Naive thymus-derived CD4-positive, alpha-beta T cell (primary cell): ENCODE measurements at regions of chr2 and their contacts with region 1.

Region 1: GRCh38 chr2:84846041-84846663 is 34.7 kb downstream of the TRABD2A start:
- DNase-seq: peak in 7 of 9 donors; percentile 68 to 89 (median 84)
- ATAC-seq: peak; percentile 85
- H3K4me3 ChIP-seq: peak overlapping the region; percentile 14
- H3K4me3 Mint-ChIP-seq: peak overlapping the region; percentile 72 to 87 (median 82)
- H3K27ac ChIP-seq: peak overlapping the region; percentile 80
- H3K27ac Mint-ChIP-seq: peak overlapping the region in 8 of 9 donors; percentile 94 to 99 (median 97)
- H3K4me1 ChIP-seq: peaks cover 93 to 98% of the 10 kb centered on the region in 2 donors
- H3K4me1 Mint-ChIP-seq: peaks cover 77 to 100% (median 92%) of the 10 kb centered on the region in 7 donors
- H3K27me3 ChIP-seq: no peaks in the 10 kb centered on the region
- H3K27me3 Mint-ChIP-seq: no peaks in the 10 kb centered on the region

Region 2: DNA sequence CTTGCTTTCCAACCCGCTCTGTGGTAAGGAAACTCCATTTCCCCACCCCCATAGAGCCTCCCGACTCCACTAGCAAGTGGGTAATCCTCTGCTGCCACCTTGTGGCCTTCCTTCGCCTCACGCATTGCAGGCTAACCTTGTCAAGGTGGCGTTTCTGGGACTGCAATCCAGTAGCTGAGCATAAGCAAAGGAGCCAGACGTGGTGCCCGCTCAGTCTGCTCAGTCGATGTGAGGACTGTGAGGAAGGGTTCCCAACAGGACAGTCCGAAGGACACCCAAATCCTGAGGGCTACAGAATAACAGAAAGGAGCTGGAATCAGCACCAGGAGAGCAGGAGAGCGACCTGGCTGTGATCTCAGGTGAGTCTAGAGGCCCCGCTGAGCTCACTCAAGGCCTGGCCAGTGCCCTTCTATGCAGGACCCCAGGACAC is 531.2 kb before region 1 on chr2:
- CTCF ChIA-PET with region 1: no interaction called
- POLR2A ChIA-PET with region 1: no interaction called
- intact Hi-C with region 1: no loop called
- DNase-seq: peak; percentile 44 to 76 (median 69)
- ATAC-seq: peak; percentile 81
- H3K4me3 ChIP-seq: no peak overlapping the region
- H3K4me3 Mint-ChIP-seq: peak overlapping the region in 1 of 10 donors; percentile 9
- H3K27ac ChIP-seq: no peak overlapping the region
- H3K27ac Mint-ChIP-seq: no peak overlapping the region
- H3K4me1 ChIP-seq: no peaks in the 10 kb centered on the region
- H3K4me1 Mint-ChIP-seq: peaks cover 2 to 6% (median 5%) of the 10 kb centered on the region in 7 donors
- H3K27me3 ChIP-seq: no peaks in the 10 kb centered on the region
- H3K27me3 Mint-ChIP-seq: peaks cover 4 to 19% (median 12%) of the 10 kb centered on the region in 5 donors

Region 3: DNA sequence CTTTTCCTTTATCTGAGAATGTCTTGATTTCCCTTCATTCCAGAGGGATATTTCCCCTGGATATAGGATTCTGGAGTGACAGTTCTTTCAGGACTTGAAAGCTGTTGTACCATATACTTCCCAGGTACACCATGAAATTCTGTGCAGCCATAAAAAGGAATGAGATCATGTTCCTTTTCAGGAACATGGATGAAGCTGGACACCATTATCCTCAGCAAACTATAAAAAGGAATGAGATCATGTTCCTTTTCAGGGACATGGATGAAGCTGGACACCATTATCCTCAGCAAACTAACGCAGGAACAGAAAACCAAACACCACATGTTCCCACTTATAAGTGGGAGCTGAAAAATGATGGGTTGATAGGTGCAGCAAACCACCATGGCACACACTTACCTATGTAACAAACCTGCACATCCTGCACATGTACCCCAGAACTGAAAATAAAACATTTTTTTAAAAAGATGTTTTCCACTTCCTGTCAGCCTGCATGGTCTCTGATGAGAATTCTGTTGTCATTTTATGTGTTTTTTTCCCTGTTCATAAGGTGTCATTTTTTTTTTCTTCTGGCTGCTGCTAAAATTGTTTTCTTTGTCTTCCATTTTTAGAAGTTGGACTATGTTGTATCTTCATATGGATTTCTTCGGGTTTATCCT is 196.5 kb before region 1 on chr2:
- CTCF ChIA-PET with region 1: interaction called, 4 read pairs
- POLR2A ChIA-PET with region 1: interaction called, 4 read pairs
- intact Hi-C with region 1: loop called in 1 of 2 experiments (anchors 5 kb)
- DNase-seq: peak in 7 of 9 donors; percentile 16 to 63 (median 49)
- ATAC-seq: no peak
- H3K4me3 ChIP-seq: no peak overlapping the region
- H3K4me3 Mint-ChIP-seq: peak overlapping the region; percentile 27 to 78 (median 58)
- H3K27ac ChIP-seq: no peak overlapping the region
- H3K27ac Mint-ChIP-seq: peak overlapping the region; percentile 2 to 92 (median 78)
- H3K4me1 ChIP-seq: peaks cover 21 to 83% of the 10 kb centered on the region in 2 donors
- H3K4me1 Mint-ChIP-seq: peaks cover 52 to 93% (median 89%) of the 10 kb centered on the region in 7 donors
- H3K27me3 ChIP-seq: no peaks in the 10 kb centered on the region
- H3K27me3 Mint-ChIP-seq: peaks cover 0 to 2% (median 0%) of the 10 kb centered on the region in 5 donors

Region 4: GRCh38 chr2:84694088-84694622 is 152.0 kb before region 1 on chr2:
- CTCF ChIA-PET with region 1: no interaction called
- POLR2A ChIA-PET with region 1: no interaction called
- intact Hi-C with region 1: loop called in 1 of 2 experiments (anchors 1 kb)
- DNase-seq: peak in 8 of 9 donors; percentile 11 to 86 (median 79)
- ATAC-seq: peak; percentile 88
- H3K4me3 ChIP-seq: peak overlapping the region; percentile 43
- H3K4me3 Mint-ChIP-seq: peak overlapping the region; percentile 27 to 80 (median 68)
- H3K27ac ChIP-seq: peak overlapping the region; percentile 59
- H3K27ac Mint-ChIP-seq: peak overlapping the region; percentile 82 to 93 (median 87)
- H3K4me1 ChIP-seq: peaks cover 24 to 38% of the 10 kb centered on the region in 2 donors
- H3K4me1 Mint-ChIP-seq: peaks cover 8 to 93% (median 76%) of the 10 kb centered on the region in 7 donors
- H3K27me3 ChIP-seq: no peaks in the 10 kb centered on the region
- H3K27me3 Mint-ChIP-seq: peaks cover 0 to 3% (median 0%) of the 10 kb centered on the region in 5 donors

Region 5: DNA sequence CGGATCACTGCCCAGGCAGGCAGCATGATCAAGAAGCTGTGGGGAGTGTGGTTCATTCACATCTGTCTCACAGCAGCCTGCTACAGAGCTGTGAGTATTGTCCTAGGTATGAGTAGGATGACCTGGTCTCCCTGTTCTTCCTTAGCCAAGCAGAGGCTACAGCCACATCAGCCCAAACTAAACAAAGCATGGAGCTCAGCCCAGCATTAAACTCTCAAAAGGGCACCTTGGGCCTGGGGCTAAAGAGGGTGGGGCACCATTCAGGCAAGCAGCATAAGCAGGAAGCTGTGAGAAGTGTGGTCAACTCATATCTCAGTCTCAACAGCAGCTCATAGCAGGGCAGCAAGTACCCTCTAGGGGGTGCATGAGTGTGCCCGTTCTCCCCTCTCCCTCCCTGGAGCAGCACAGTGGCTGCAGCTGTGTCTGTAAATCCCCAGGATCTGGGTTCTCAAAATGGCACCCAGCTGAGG is 104.8 kb before region 1 on chr2:
- CTCF ChIA-PET with region 1: interaction called, 4 read pairs
- POLR2A ChIA-PET with region 1: interaction called, 6 read pairs
- intact Hi-C with region 1: loop called in 1 of 2 experiments (anchors 5 kb)
- DNase-seq: peak in 8 of 9 donors; percentile 14 to 43 (median 28)
- ATAC-seq: peak; percentile 94
- H3K4me3 ChIP-seq: no peak overlapping the region
- H3K4me3 Mint-ChIP-seq: peak overlapping the region in 4 of 10 donors; percentile 5 to 30 (median 23)
- H3K27ac ChIP-seq: no peak overlapping the region
- H3K27ac Mint-ChIP-seq: peak overlapping the region in 6 of 9 donors; percentile 7 to 71 (median 38)
- H3K4me1 ChIP-seq: peaks cover 14 to 17% of the 10 kb centered on the region in 2 donors
- H3K4me1 Mint-ChIP-seq: peaks cover 12 to 75% (median 51%) of the 10 kb centered on the region in 7 donors
- H3K27me3 ChIP-seq: no peaks in the 10 kb centered on the region
- H3K27me3 Mint-ChIP-seq: peaks cover 0 to 21% (median 0%) of the 10 kb centered on the region in 5 donors

Region 6: GRCh38 chr2:84832772-84833461 is 13.2 kb before region 1 on chr2:
- CTCF ChIA-PET with region 1: interaction called, 16 read pairs
- POLR2A ChIA-PET with region 1: interaction called, 49 read pairs
- intact Hi-C with region 1: loop called (anchors 1 kb)
- DNase-seq: no peak
- ATAC-seq: peak; percentile 64
- H3K4me3 ChIP-seq: peak overlapping the region; percentile 50
- H3K4me3 Mint-ChIP-seq: peak overlapping the region in 7 of 10 donors; percentile 74 to 89 (median 79)
- H3K27ac ChIP-seq: peak overlapping the region; percentile 79
- H3K27ac Mint-ChIP-seq: peak overlapping the region in 1 of 9 donors; percentile 92
- H3K4me1 ChIP-seq: peaks cover 36 to 93% of the 10 kb centered on the region in 2 donors
- H3K4me1 Mint-ChIP-seq: peaks cover 18 to 46% (median 26%) of the 10 kb centered on the region in 7 donors
- H3K27me3 ChIP-seq: no peaks in the 10 kb centered on the region
- H3K27me3 Mint-ChIP-seq: no peaks in the 10 kb centered on the region

Region 7: GRCh38 chr2:84856787-84857186 is 10.6 kb after region 1 on chr2:
- CTCF ChIA-PET with region 1: interaction called, 21 read pairs
- POLR2A ChIA-PET with region 1: interaction called, 261 read pairs
- intact Hi-C with region 1: loop called (anchors 1 kb)
- DNase-seq: peak in 2 of 9 donors; percentile 31 to 49
- ATAC-seq: peak; percentile 73
- H3K4me3 ChIP-seq: no peak overlapping the region
- H3K4me3 Mint-ChIP-seq: peak overlapping the region; percentile 54 to 89 (median 85)
- H3K27ac ChIP-seq: peak overlapping the region; percentile 72
- H3K27ac Mint-ChIP-seq: peak overlapping the region; percentile 85 to 99 (median 96)
- H3K4me1 ChIP-seq: peaks cover 53 to 95% of the 10 kb centered on the region in 2 donors
- H3K4me1 Mint-ChIP-seq: peaks cover 72 to 98% (median 96%) of the 10 kb centered on the region in 7 donors
- H3K27me3 ChIP-seq: no peaks in the 10 kb centered on the region
- H3K27me3 Mint-ChIP-seq: no peaks in the 10 kb centered on the region

Region 8: DNA sequence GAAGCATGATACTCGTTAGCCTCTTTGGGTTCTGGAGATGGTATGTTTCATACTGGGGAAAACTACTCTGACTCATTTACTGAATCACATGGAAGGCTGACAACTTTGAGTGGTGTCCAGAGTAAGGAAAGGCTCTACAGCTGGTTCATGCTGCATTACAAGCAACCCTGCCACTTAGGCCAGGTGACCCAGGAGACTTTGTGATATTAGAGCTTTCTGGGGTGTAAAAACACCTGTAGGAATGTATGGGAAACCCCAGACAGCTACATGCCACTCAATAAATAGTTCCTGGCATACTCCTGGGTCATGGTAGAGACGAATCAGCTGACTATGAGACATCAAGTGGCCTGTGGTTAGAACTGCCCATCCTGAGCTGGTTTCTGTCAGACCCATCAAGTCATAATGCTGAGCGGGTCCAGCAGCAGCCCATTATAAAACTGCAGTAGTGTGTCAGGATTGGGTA is 265.7 kb after region 1 on chr2:
- CTCF ChIA-PET with region 1: no interaction called
- POLR2A ChIA-PET with region 1: no interaction called
- intact Hi-C with region 1: no loop called
- DNase-seq: no peak
- ATAC-seq: no peak
- H3K4me3 ChIP-seq: no peak overlapping the region
- H3K4me3 Mint-ChIP-seq: no peak overlapping the region
- H3K27ac ChIP-seq: no peak overlapping the region
- H3K27ac Mint-ChIP-seq: no peak overlapping the region
- H3K4me1 ChIP-seq: no peaks in the 10 kb centered on the region
- H3K4me1 Mint-ChIP-seq: no peaks in the 10 kb centered on the region
- H3K27me3 ChIP-seq: no peaks in the 10 kb centered on the region
- H3K27me3 Mint-ChIP-seq: peaks cover 20 to 33% (median 22%) of the 10 kb centered on the region in 5 donors